ENCODE measurements at regions of chr22 and their contacts with region 1.

Region 1: DNA sequence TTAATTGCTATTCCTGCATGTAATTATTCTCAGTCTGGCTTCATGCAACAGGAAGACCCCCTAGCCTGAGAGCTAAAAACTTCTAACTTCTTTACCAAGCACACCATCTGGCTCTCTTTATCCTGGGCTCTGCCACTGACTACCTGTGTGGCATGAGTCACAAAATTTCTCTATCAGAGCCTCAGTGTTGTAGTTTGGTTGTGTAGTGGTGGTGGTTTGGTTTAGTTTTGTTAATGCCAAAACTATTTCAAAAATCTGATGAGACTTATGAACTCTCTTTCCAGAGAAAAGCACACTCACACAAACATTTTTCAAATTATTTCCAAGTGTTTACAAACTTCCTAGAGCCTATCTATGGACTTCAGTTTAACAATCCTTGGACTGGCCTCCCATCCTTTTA is 7.5 kb upstream of the IL17RA start:
- DNase-seq: no peak
- ATAC-seq: no peak
- H3K4me3 ChIP-seq: no peak overlapping the region
- H3K4me3 Mint-ChIP-seq: no peak overlapping the region
- H3K27ac ChIP-seq: no peak overlapping the region
- H3K27ac Mint-ChIP-seq: no peak overlapping the region
- H3K4me1 ChIP-seq: peaks cover 4 to 9% of the 10 kb centered on the region in 2 experiments
- H3K4me1 Mint-ChIP-seq: peaks cover 0 to 16% (median 16%) of the 10 kb centered on the region in 3 donors
- H3K27me3 ChIP-seq: peaks cover 0 to 4% of the 10 kb centered on the region in 2 experiments
- H3K27me3 Mint-ChIP-seq: no peaks in the 10 kb centered on the region

Region 2: GRCh38 chr22:17095538-17095937 is 18.3 kb after region 1 on chr22:
- CTCF ChIA-PET with region 1: interaction called in 1 of 2 experiments, 3 read pairs
- POLR2A ChIA-PET with region 1: interaction called in 1 of 2 experiments, 22 read pairs
- DNase-seq: no peak
- ATAC-seq: no peak
- H3K4me3 ChIP-seq: no peak overlapping the region
- H3K4me3 Mint-ChIP-seq: peak overlapping the region in 1 of 3 donors; percentile 24
- H3K27ac ChIP-seq: no peak overlapping the region
- H3K27ac Mint-ChIP-seq: peak overlapping the region; percentile 39 to 71
- H3K4me1 ChIP-seq: peaks cover 71 to 79% of the 10 kb centered on the region in 2 experiments
- H3K4me1 Mint-ChIP-seq: peaks cover 94 to 97% (median 96%) of the 10 kb centered on the region in 3 donors
- H3K27me3 ChIP-seq: no peaks in the 10 kb centered on the region
- H3K27me3 Mint-ChIP-seq: no peaks in the 10 kb centered on the region

Region 3: DNA sequence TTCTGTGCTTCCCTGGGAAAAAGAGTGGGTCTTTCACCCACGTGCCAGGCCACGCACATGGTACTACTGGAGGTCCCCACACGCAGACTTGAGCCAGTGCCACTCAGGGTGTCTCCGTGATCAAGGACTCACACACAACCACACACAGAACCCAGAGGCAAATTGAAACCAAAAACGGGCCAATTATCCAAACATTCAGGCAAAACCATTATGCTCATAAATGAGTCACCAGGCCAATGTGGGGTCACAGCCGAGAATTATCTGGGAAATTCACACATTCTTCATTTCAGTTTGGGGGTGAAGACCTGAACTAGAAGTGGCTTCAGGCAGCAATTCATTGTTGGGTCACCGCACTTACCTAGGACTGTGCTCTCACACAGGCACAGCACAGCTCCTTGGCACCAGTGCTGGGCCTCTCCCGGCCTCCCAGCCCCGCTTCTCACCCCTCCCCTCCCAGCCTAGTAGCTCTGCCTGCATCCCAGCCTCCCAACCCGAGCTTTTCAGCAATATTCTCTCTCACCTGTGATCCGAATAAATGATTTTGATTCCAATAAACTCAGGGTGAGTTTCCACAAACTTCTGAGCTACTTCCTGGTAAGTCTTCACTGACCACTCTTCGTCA is 114.0 kb after region 1 on chr22:
- CTCF ChIA-PET with region 1: no interaction called
- POLR2A ChIA-PET with region 1: interaction called in 1 of 2 experiments, 13 read pairs
- DNase-seq: no peak
- ATAC-seq: no peak
- H3K4me3 ChIP-seq: no peak overlapping the region
- H3K4me3 Mint-ChIP-seq: no peak overlapping the region
- H3K27ac ChIP-seq: no peak overlapping the region
- H3K27ac Mint-ChIP-seq: peak overlapping the region in 1 of 2 donors; percentile 27
- H3K4me1 ChIP-seq: no peaks in the 10 kb centered on the region
- H3K4me1 Mint-ChIP-seq: peaks cover 7 to 8% (median 7%) of the 10 kb centered on the region in 3 donors
- H3K27me3 ChIP-seq: no peaks in the 10 kb centered on the region
- H3K27me3 Mint-ChIP-seq: no peaks in the 10 kb centered on the region

Region 4: GRCh38 chr22:17501679-17502285 is 424.5 kb after region 1 on chr22:
- CTCF ChIA-PET with region 1: interaction called, 15 to 81 read pairs
- POLR2A ChIA-PET with region 1: no interaction called
- DNase-seq: peak in 19 of 35 experiments; percentile 2 to 80 (median 17)
- ATAC-seq: peak; percentile 63 to 81 (median 70)
- H3K4me3 ChIP-seq: no peak overlapping the region
- H3K4me3 Mint-ChIP-seq: no peak overlapping the region
- H3K27ac ChIP-seq: no peak overlapping the region
- H3K27ac Mint-ChIP-seq: no peak overlapping the region
- H3K4me1 ChIP-seq: no peaks in the 10 kb centered on the region
- H3K4me1 Mint-ChIP-seq: no peaks in the 10 kb centered on the region
- H3K27me3 ChIP-seq: peaks cover 0 to 11% of the 10 kb centered on the region in 2 experiments
- H3K27me3 Mint-ChIP-seq: peaks cover 0 to 2% of the 10 kb centered on the region in 2 donors

Measured in T-cell (primary cell).